MCF 10A (cell line): ENCODE measurements at regions of chr5 and their contacts with region 1.

Region 1: GRCh38 chr5:141960449-141961202 is 2.6 kb upstream of the PCDH12 start:
- DNase-seq: peak; percentile 96
- H3K4me3 Mint-ChIP-seq: no peak overlapping the region
- H3K27ac Mint-ChIP-seq: peak overlapping the region; percentile 68
- H3K4me1 Mint-ChIP-seq: peaks cover 19% of the 10 kb centered on the region
- H3K27me3 Mint-ChIP-seq: no peaks in the 10 kb centered on the region
- CTCF ChIP-seq: peak; percentile 87

Region 2: DNA sequence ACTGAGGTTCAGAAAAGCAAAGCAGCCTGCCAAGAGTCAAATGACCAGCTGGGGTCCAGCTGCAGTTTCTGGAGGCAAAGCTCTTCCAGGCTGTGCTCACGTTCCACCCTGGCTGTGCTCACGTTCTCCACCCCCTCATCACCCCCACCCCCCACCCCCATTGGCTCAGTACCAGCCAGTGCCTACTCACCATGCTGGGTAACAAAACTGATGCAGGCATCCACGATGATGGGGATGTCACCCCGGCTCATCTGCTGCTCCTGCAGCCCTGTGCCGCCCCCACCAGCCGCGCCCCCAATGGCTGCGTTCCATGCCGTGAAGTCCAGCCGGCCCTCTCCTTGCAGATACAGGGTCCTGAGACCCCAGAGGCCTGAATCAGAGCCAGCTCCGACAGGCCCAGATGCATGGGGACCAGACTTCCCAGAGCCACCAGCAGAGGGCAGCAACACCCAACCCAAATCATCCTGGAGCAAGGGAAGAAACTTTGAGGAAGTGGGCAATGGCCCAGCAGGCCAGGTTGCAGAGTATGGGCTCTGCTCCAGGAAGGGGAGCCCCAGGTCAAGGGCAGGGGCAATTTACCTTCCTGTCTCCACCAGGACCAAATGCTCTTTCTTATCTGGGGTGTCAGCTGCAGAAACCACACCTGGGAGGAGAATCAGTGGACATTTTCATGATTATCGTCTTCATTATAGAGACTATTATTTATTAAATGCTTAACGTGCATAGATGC is 295.7 kb before region 1 on chr5:
- CTCF ChIA-PET with region 1: interaction called, 22 read pairs
- POLR2A ChIA-PET with region 1: no interaction called
- intact Hi-C with region 1: loop called (anchors 1 kb)
- DNase-seq: peak; percentile 83
- H3K4me3 Mint-ChIP-seq: no peak overlapping the region
- H3K27ac Mint-ChIP-seq: no peak overlapping the region
- H3K4me1 Mint-ChIP-seq: peaks cover 4% of the 10 kb centered on the region
- H3K27me3 Mint-ChIP-seq: no peaks in the 10 kb centered on the region
- CTCF ChIP-seq: peak; percentile 94

Region 3: GRCh38 chr5:141691867-141692532 is 268.6 kb before region 1 on chr5:
- CTCF ChIA-PET with region 1: interaction called, 395 read pairs
- POLR2A ChIA-PET with region 1: interaction called, 20 read pairs
- intact Hi-C with region 1: loop called (anchors 1 kb)
- DNase-seq: peak; percentile 87
- H3K4me3 Mint-ChIP-seq: peak overlapping the region; percentile 62
- H3K27ac Mint-ChIP-seq: peak overlapping the region; percentile 43
- H3K4me1 Mint-ChIP-seq: peaks cover 8% of the 10 kb centered on the region
- H3K27me3 Mint-ChIP-seq: peaks cover 35% of the 10 kb centered on the region
- CTCF ChIP-seq: peak; percentile 99

Region 4: DNA sequence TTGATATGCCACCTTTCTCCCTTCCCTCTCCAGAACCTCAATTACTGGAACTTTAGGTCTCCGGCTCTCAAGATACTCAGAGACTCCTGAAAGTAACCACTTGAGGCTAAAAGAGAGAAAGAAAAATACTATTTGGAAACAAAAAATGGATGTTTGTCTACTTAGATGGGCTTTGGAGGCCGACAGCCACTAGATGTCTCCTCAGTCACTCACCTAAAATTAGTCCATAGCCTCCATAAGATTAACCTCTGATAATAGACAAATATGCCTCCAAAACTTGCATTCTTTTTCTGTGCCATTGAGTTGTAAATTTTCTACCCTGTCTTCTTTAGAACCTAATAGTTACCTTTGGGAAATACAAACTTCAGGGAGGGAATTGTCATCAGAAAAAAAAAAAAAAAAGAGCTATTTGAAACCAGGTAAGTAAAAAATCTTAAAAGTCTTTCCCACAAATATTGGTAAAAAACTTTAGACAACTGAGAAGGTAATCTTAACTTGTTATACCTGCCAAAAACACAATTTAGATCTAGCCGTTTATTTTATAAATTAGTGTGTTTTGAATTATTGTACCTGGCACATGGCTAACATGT is 71.2 kb before region 1 on chr5:
- CTCF ChIA-PET with region 1: interaction called, 519 read pairs
- POLR2A ChIA-PET with region 1: interaction called, 25 read pairs
- intact Hi-C with region 1: loop called (anchors 1 kb)
- DNase-seq: peak; percentile 45
- H3K4me3 Mint-ChIP-seq: no peak overlapping the region
- H3K27ac Mint-ChIP-seq: no peak overlapping the region
- H3K4me1 Mint-ChIP-seq: no peaks in the 10 kb centered on the region
- H3K27me3 Mint-ChIP-seq: peaks cover 48% of the 10 kb centered on the region
- CTCF ChIP-seq: peak; percentile 60

Region 5: GRCh38 chr5:141914199-141914743 is 46.4 kb before region 1 on chr5:
- CTCF ChIA-PET with region 1: interaction called, 44 read pairs
- POLR2A ChIA-PET with region 1: interaction called, 6 read pairs
- intact Hi-C with region 1: no loop called
- DNase-seq: no peak
- H3K4me3 Mint-ChIP-seq: no peak overlapping the region
- H3K27ac Mint-ChIP-seq: no peak overlapping the region
- H3K4me1 Mint-ChIP-seq: peaks cover 14% of the 10 kb centered on the region
- H3K27me3 Mint-ChIP-seq: peaks cover 16% of the 10 kb centered on the region
- CTCF ChIP-seq: no peak

Region 6: DNA sequence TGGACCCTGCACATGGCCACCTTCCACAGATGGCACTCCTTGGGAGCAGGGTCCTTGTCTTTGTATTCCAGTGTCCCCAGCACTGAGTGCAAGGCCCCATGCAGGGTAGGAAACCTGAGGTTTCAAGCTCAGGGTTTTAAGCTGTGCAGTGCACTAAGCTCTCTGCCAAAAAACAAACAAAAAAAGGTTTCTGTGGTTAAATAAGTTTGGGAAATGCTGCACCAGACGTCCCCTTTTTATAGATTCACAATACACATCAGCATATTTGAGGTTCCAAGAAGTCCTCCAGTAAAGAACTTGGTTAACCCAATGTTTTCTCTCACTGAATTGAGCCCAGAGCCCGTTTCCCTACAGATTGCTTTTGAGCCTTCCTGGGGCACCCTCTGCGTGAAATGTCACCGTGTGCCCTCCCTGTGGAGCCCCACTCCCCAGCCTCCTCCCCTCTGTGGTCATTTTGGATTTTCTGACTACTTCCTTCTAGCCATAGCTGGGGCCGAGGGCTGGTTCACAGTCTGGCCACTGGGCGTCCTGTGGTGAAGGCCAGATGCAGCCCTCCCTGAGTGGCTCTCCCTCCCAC is 19.8 kb before region 1 on chr5:
- CTCF ChIA-PET with region 1: interaction called, 155 read pairs
- POLR2A ChIA-PET with region 1: interaction called, 14 read pairs
- intact Hi-C with region 1: no loop called
- DNase-seq: no peak
- H3K4me3 Mint-ChIP-seq: no peak overlapping the region
- H3K27ac Mint-ChIP-seq: peak overlapping the region; percentile 28
- H3K4me1 Mint-ChIP-seq: peaks cover 9% of the 10 kb centered on the region
- H3K27me3 Mint-ChIP-seq: no peaks in the 10 kb centered on the region
- CTCF ChIP-seq: no peak

Region 7: GRCh38 chr5:142192286-142193113 is 231.9 kb after region 1 on chr5:
- CTCF ChIA-PET with region 1: no interaction called
- POLR2A ChIA-PET with region 1: no interaction called
- intact Hi-C with region 1: no loop called
- DNase-seq: no peak
- H3K4me3 Mint-ChIP-seq: no peak overlapping the region
- H3K27ac Mint-ChIP-seq: no peak overlapping the region
- H3K4me1 Mint-ChIP-seq: no peaks in the 10 kb centered on the region
- H3K27me3 Mint-ChIP-seq: peaks cover 14% of the 10 kb centered on the region
- CTCF ChIP-seq: no peak

Region 8: DNA sequence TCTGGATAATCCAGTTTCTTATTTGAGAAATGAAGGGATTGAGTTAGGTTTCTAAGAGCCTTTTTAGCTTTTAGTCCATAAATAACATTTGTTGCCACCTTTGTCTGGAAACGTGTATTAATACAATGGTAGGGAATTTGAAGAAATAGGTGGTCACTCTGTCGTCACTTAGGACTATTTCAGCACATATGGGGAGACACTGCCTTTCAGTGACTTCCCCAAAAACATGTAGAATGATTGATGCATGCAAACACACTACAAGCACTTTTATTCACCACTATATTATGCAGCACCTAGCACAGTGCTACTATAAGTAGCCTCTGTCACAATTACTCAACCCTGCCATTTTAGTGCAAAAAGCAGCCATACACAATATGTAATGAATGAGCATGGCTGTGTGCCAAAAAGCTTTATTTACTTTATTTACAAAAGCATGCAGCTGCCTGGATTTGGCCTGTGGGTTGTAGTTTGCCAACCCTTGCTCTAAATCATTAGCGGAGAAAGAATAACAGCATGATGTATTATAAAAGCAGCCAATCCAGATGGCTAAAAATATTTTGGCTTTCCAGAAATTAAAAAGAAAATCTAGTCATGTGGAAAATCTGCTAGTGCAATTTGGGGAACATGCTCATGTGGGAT is 1697.1 kb after region 1 on chr5:
- CTCF ChIA-PET with region 1: no interaction called
- POLR2A ChIA-PET with region 1: no interaction called
- intact Hi-C with region 1: no loop called
- DNase-seq: peak; percentile 84
- H3K4me3 Mint-ChIP-seq: no peak overlapping the region
- H3K27ac Mint-ChIP-seq: no peak overlapping the region
- H3K4me1 Mint-ChIP-seq: peaks cover 22% of the 10 kb centered on the region
- H3K27me3 Mint-ChIP-seq: no peaks in the 10 kb centered on the region
- CTCF ChIP-seq: no peak